ENCODE measurements at regions of chr18 and their contacts with region 1.

Region 1: GRCh38 chr18:21264651-21265050 is 22.6 kb downstream of the GREB1L start:
- DNase-seq: peak; percentile 3 to 34
- H3K4me3 ChIP-seq: no peak overlapping the region
- H3K27ac ChIP-seq: no peak overlapping the region
- H3K4me1 ChIP-seq: no peaks in the 10 kb centered on the region; the same call in 1 of the 2 replicates
- H3K27me3 ChIP-seq: no peaks in the 10 kb centered on the region
- CTCF ChIP-seq: no peak

Region 2: GRCh38 chr18:21303913-21304312 is 39.3 kb after region 1 on chr18:
- CTCF ChIA-PET with region 1: no interaction called
- POLR2A ChIA-PET with region 1: no interaction called
- intact Hi-C with region 1: loop called (anchors 2 kb)
- DNase-seq: peak in 1 of 2 experiments; percentile 42
- H3K4me3 ChIP-seq: no peak overlapping the region
- H3K27ac ChIP-seq: no peak overlapping the region
- H3K4me1 ChIP-seq: peaks cover 23% of the 10 kb centered on the region
- H3K27me3 ChIP-seq: no peaks in the 10 kb centered on the region
- CTCF ChIP-seq: no peak

Region 3: DNA sequence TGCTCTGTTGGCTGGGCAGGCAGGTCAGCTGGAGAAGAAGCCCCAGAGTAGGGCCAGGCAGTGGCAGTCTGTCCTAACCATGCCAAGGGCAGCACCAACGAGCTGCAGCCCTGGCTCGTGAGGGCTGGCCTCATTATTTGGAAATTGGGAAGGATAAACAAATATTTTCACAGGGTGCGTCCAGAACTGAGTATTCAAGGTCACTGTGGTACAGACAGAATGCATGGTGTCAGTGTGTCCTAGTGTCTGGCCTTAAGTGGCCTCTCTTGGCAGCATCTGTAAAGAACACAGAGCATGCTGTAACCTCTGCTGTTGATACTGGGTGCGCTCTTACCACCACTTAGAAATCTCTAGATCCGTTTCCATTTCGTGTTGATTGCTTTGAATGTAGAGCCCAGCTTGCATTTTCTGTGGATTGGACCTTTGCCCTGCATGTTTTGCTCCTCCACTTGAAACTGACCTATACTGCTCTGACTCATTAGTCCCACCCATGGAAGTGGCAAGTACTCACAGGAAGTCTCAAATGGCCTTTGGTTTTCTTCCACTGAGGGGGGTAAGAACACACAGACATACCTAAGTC is 65.6 kb after region 1 on chr18:
- CTCF ChIA-PET with region 1: no interaction called
- POLR2A ChIA-PET with region 1: no interaction called
- intact Hi-C with region 1: loop called (anchors 10 kb)
- DNase-seq: peak; percentile 32 to 88
- H3K4me3 ChIP-seq: peak overlapping the region; percentile 37; the same call in 1 of the 2 replicates
- H3K27ac ChIP-seq: peak overlapping the region; percentile 93
- H3K4me1 ChIP-seq: peaks cover 58% of the 10 kb centered on the region
- H3K27me3 ChIP-seq: no peaks in the 10 kb centered on the region
- CTCF ChIP-seq: no peak

Region 4: DNA sequence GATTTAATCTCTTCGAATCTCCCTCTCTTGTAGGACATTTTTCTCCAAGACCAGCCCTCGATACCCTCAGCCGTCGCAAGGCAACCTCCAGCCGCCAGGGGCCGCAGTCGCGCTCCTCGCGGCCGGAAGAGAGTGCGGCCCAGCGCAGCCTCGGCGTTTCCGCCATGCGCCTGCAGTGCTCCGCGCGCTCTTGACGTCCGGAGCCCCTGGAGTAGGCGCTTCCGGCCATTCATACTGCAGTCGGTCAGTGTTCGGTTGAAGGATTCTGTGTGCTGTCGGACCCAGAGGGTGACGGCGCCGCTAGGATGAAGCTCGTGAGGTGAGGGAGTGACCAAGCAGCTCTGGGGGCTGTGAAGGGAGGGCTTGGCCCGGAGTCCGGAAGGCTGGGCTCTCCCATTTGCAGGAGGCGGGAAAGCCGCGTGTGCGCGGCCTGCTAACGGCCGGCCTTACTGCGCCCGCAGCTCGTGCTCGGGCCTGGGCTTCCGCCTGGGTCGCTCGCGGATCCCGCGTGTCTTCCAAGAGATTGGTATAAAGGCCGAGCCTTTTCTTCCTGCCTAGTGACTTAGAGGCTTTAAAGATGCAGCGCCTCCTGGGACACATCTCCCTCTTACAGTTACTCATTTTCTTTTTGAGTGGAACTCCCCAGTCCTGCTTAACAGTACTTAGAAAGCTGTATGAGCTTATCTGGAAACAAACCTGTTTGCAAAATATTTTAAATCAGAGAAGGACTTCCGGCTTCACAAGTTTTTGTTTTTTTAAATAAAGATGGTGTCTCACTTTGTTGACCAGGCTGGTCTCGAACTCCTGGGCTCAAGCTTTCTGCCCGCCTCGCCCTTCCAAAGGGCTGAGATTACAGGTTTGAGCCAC is 347.7 kb after region 1 on chr18 and contains the start of gene SNRPD1:
- CTCF ChIA-PET with region 1: no interaction called
- POLR2A ChIA-PET with region 1: no interaction called
- intact Hi-C with region 1: no loop called
- DNase-seq: peak; percentile 69 to 87
- H3K4me3 ChIP-seq: peak within 1 kb of the TSS; percentile 83
- H3K27ac ChIP-seq: peak within 1 kb of the TSS; percentile 75
- H3K4me1 ChIP-seq: peaks cover 12% of the 10 kb centered on the region; the same call in 1 of the 2 replicates
- H3K27me3 ChIP-seq: no peaks in the 10 kb centered on the region
- CTCF ChIP-seq: peak; percentile 80
- total RNA-seq, gene SNRPD1: 56.0 and 57.6 TPM in 2 replicates